G401 (cell line): ENCODE measurements at regions of chr17 and their contacts with region 1.

Region 1: GRCh38 chr17:82349287-82349701 is 9.8 kb upstream of the TEX19 start:
- DNase-seq: peak; percentile 51

Region 2: DNA sequence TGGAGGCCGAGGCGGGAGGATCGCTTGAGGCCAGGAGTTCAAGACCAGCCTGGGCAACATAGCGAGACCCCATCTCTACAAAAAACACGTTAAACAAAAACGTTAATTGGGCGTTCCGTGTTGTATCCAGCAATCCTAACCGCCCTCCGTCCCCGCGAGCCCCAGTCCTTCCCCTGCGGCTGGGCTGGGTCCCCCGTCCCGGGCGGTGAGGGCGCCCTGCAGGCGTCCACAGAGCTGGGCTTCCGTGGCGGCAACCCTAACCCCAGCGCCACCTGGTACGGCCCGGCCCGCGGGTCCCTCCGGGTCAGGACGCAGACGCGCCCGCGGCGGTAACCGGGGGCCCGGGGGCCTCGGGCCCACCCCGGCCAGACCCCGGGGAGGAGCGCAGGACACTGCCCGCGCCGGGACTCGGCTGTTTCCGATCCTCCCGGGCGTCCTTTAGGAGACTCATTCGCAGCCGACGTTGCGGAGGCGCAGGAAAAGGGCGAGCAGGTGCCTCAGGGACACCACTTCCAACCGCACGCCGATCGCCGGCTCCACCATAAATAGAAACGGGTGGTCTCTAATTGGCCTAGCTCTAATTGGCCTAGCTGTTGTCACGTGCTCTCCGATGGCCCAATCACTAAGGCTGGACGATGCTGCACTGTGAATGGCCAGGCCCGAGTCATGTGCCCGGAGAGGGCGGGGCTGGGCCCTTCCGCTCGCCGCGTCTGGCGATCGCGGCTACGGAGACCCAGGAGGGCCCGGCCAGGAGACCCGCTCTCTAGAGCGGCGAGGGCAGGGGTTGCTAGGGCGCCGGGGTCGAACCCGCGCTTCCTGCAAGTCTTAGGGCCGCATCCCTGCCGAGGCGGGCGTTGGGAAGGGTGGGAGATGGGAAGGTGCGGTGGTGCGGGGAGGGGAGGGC is 56.8 kb before region 1 on chr17:
- in situ Hi-C with region 1: loop called (anchors 10 kb)
- DNase-seq: peak; percentile 98

Region 3: DNA sequence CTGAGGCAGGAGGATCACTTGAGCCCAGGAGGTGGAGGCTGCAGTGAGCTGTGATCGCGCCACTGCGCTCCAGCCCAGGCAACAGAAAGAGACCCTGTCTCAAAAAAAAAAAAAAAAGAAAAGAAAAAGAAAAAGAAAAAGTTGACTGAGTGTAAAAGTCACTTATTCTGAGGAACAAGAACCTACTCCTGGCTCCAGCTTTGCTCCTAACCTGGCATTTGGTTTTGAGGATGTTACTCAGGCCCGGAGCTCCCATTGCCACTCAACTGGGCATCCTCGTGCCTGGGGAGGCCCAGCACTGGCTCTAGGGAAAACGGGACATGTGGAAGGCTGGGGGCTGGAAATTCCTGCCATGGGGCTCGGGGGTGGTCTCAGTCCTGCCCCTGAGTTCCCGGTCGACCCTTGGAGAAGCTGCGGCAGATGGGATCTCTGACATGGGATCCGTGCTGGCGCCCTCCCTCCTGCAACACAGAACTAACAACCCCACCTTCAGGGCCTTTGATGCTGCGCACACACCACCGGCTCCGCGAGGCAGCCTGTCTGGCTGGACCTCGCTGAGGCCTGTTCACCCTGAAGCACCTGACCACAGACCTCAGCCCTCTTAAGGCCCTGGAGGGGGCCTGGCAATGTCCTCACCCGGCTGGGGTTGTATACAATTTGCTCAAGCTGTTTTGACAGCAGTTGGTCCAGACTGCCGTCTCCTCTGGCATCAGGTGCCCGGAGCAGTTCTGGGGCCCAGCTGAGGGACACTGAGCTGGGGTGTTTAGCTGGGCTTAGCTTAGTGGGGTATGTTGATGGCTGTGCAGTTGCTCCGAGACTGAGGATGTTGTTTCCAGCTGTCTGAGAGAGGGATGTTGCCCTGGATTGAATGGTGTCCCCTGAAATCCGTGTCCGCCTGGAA is 44.2 kb before region 1 on chr17:
- in situ Hi-C with region 1: no loop called
- DNase-seq: no peak